Activated CD8-positive, alpha-beta T cell treated with anti-CD3 and anti-CD28 coated beads, Interleukin-2, amount 10 ng/mL, durations not matched to agents 7 days and 5 days (primary cell): ENCODE measurements at regions of chr16 and their contacts with region 1.

Region 1: GRCh38 chr16:30429678-30430427 is at the start of gene DCTPP1:
- DNase-seq: peak; percentile 99
- ATAC-seq: peak; percentile 99
- H3K4me3 Mint-ChIP-seq: no peak within 1 kb of the TSS
- H3K27ac Mint-ChIP-seq: no peak within 1 kb of the TSS
- H3K4me1 Mint-ChIP-seq: peaks cover 40% of the 10 kb centered on the region
- H3K27me3 Mint-ChIP-seq: no peaks in the 10 kb centered on the region
- total RNA-seq, gene DCTPP1: 87.3 to 92.8 TPM

Region 2: DNA sequence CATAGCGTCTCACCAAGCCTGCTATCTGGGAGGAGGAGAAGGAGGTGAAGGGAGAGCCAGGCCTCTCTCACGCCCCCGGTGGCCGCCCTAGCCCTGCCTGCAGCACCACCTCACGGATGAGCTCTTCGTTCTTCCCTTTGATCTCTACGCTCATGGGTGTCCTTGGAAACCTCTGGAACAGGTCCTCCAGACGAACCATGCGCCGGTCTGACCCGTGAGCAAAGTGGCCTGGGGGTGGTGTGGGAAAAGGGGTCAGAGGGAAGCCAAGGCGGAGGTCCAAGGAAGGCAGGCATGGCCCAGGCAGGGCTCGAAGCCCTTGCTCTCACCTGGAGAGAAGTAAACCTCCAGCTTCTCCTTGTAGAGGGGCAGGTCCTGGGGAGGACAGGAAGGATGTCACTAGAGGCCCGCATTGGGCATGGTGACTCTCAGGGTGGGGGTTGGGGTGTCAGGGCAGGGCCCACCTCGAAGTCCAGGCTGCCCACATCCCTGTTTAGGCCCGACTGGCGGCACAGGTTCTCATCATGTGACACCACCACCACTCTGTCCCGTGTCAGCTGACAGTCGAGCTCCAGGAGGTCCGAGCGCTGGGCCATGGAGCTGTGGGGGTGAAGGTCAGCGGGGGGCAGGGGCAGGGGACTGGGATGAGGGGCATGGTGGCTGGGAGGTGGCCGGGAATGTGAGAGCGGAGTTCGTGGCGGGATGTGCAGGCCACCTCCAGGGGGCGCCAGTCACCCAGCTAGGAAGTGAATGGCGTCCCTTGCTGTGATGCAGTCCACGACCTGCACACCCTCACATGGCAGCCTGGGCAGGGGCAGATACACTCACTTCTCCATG is 317.4 kb before region 1 on chr16:
- CTCF ChIA-PET with region 1: no interaction called
- POLR2A ChIA-PET with region 1: no interaction called
- DNase-seq: peak; percentile 67
- ATAC-seq: peak; percentile 78
- H3K4me3 Mint-ChIP-seq: no peak overlapping the region
- H3K27ac Mint-ChIP-seq: peak overlapping the region; percentile 60
- H3K4me1 Mint-ChIP-seq: peaks cover 21% of the 10 kb centered on the region
- H3K27me3 Mint-ChIP-seq: no peaks in the 10 kb centered on the region

Region 3: GRCh38 chr16:30361180-30361579 is 68.7 kb before region 1 on chr16:
- CTCF ChIA-PET with region 1: no interaction called
- POLR2A ChIA-PET with region 1: no interaction called
- DNase-seq: no peak
- ATAC-seq: no peak
- H3K4me3 Mint-ChIP-seq: no peak overlapping the region
- H3K27ac Mint-ChIP-seq: no peak overlapping the region
- H3K4me1 Mint-ChIP-seq: peaks cover 38% of the 10 kb centered on the region
- H3K27me3 Mint-ChIP-seq: no peaks in the 10 kb centered on the region

Region 4: DNA sequence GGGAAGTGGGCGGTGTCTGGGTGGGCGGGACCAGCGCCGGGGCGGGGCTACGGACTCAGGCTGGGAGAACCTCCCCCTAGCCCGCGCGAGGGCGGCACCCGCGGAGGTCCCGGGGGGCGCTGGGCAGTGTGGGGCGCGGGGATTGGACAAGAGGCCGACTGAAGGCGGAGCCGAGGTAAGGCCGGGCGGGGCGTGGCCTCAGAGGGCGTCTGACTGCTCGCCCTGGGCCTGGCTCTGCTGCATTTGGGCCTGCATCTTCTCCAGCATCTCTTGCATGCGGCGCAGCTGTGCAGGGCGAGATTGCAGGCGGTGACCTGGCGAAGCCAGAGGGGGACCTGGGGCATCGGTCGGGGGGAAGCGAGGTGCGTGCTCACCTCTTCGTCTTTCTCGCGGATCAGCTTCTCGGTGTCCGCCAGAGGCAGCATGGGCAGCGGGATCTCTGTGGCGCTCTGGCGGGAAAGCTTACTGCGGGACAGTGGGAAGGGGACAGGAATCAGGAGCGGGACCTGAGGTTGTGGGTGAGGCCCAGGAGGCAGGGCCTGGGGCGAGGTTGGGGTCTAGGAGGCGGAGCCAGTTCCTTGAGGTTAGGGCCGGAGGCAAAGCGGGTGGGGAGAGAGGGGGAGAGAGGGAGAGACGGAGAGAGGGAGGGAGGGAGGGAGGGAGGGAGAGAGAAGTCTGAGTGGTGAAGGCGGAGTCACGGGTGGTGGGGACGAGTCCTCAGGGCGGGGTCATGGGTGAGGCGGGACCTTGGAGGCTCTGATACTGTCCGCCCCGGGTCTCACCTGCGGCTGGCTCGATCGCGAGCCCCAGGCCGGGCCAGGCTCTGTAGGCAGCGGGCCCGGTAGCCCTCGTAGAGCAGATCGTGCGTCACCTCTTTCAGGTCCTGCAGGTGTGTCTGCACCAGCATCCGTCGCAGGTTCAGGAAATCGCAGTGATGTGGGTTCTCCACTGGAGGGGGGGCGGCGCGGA is 51.3 kb before region 1 on chr16:
- CTCF ChIA-PET with region 1: interaction called, 15 read pairs
- POLR2A ChIA-PET with region 1: interaction called, 3 read pairs
- DNase-seq: peak; percentile 99
- ATAC-seq: peak; percentile 88
- H3K4me3 Mint-ChIP-seq: peak overlapping the region; percentile 99
- H3K27ac Mint-ChIP-seq: peak overlapping the region; percentile 100
- H3K4me1 Mint-ChIP-seq: peaks cover 65% of the 10 kb centered on the region
- H3K27me3 Mint-ChIP-seq: no peaks in the 10 kb centered on the region

Region 5: DNA sequence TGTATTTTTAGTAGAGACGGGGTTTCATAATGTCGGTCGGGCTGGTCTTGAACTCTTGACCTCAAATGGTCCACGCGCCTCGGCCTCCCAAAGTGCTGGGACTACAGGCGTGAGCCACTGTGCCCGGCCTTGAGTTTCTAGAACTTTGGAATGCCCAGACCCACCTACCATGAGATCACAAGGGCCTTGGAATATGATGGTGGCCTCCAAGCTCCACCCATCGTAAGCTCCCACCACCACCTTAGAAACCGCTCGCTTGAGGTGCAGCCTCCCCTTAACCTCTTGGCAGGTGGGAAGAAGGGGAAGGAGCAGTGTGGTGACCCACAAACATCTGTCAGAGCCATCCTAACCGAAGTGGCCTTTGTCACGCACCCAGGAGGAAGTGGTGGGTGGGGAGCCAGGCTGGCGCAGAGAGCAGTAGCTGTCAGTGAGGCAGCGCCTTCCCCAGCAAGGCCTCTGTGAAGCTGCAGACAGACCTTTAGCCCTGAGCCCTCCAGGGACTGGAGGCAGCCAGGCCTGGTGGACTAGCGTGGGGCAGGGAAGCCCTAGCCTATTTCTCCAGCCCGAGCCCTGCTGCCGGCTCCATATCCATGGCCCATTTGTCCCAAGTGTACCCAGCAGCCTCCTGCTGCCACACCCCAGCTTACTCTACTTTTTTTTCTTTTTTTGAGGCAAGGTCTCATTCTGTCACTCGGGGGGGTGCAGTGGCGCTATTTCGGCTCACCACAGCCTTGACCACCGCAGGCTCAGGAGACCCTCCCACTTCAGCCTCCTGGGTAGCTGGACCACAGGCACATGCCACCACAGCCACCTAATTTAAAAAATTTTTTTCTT is 28.9 kb after region 1 on chr16:
- CTCF ChIA-PET with region 1: interaction called, 42 read pairs
- POLR2A ChIA-PET with region 1: interaction called, 8 read pairs
- DNase-seq: peak; percentile 95
- ATAC-seq: peak; percentile 97
- H3K4me3 Mint-ChIP-seq: peak overlapping the region; percentile 71
- H3K27ac Mint-ChIP-seq: peak overlapping the region; percentile 98
- H3K4me1 Mint-ChIP-seq: peaks cover 74% of the 10 kb centered on the region
- H3K27me3 Mint-ChIP-seq: no peaks in the 10 kb centered on the region

Region 6: DNA sequence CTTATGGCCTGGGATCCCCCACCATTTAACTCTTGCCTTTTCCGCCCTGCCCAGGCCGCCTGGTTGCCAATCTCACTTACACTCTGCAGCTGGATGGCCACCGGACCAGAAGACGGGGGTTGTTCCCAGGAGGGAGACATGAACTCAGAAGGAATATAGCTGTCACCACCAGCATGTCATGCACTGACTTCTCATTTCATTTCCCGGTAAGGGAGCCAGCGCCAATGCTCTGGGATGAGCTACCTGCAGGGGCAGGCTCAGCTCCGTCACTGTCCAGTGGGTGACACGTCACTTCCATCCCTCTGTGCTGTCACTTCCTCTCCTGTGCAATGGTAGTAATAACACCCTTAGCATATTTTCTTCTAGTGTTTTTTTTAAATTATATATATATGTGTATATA is 69.4 kb after region 1 on chr16:
- CTCF ChIA-PET with region 1: interaction called, 11 read pairs
- POLR2A ChIA-PET with region 1: interaction called, 12 read pairs
- DNase-seq: no peak
- ATAC-seq: no peak
- H3K4me3 Mint-ChIP-seq: no peak overlapping the region
- H3K27ac Mint-ChIP-seq: peak overlapping the region; percentile 14
- H3K4me1 Mint-ChIP-seq: peaks cover 11% of the 10 kb centered on the region
- H3K27me3 Mint-ChIP-seq: no peaks in the 10 kb centered on the region

Region 7: DNA sequence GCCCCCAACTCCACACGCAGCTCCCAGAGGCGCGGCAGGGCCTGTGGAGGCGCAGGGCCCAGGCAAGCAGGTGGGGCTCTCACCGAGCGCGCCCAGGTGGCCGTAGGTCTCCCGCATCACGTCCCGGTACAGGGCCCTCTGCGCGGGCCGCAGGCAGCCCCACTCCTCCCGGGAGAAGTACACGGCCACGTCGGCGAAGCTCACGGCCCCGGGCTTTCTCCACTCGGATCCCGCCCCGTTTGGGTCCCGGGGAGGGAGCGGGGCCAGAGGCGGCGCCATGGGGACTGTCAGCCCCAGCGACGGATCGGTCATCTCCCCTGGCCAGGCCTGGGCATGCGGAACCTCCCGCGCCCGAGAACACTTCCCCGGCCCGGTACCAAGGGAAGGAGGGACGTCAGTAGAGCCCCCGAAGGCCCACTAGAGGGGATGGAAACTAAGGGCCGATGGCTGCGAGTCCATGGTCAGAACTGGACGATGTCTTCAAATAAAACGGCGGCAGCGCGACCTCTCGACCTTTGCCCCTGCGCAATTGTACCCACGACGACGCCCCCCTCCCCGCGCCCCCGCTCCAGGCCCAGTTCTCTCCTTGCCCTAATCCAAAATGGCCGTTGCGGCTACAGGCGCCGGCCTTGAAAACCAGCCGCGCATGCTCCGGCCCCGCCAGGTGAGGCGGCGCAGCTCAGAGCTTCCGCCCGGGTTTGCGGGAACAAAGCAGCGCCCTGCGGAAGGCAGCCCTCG is 104.7 kb after region 1 on chr16 and contains the start of gene ZNF747:
- CTCF ChIA-PET with region 1: interaction called, 46 read pairs
- POLR2A ChIA-PET with region 1: interaction called, 7 read pairs
- DNase-seq: peak; percentile 94
- ATAC-seq: peak; percentile 83
- H3K4me3 Mint-ChIP-seq: peak within 1 kb of the TSS; percentile 85
- H3K27ac Mint-ChIP-seq: peak within 1 kb of the TSS; percentile 95
- H3K4me1 Mint-ChIP-seq: peaks cover 42% of the 10 kb centered on the region
- H3K27me3 Mint-ChIP-seq: no peaks in the 10 kb centered on the region
- total RNA-seq, gene ZNF747: 8.9 to 10.8 TPM

Region 8: DNA sequence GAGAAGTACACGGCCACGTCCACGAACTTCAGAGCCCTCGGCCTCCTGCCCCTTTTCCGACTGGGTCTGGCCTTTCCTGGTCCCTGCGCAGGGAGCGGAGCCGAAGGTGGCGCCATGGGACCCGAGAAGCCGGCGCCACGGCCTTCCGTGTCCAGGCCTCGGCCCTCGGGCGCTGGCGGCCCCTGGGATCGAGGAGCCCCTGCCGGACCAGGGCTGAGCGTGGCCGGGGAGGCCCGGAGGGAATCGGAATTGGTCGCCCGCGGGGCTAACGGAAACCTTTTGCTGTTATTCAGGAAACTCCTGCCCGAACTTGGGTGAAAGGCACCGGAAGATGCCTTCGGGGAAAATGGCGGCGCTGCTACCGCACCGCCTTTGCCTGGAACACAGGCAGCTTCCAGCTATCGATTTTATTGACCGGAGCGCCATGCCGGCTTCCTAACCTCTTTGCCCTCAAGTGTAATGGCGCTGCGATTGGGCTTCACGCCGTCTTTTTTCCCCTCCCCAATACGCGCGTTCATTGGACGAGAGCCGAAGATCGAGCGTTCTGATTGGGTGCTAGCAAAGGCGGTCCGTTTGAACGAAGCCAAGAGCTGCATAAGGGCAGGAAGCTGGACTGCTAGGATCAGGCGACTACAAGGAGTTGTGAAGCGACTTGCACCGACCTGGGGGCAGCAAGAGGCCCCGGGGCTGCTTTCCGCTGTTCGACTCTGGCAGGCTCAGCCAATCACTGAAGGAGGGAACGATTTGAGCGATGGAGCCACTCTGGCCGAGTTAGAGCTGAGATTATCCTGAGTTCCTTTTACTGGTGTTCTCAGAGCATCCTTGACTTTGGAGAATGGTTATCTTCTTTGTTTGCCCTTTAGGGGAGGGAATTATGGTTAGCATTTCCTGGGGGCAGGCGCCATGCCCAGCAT is 180.3 kb after region 1 on chr16 and contains the start of gene ZNF689:
- CTCF ChIA-PET with region 1: interaction called, 22 read pairs
- POLR2A ChIA-PET with region 1: interaction called, 4 read pairs
- DNase-seq: peak; percentile 97
- ATAC-seq: peak; percentile 92
- H3K4me3 Mint-ChIP-seq: peak within 1 kb of the TSS; percentile 84
- H3K27ac Mint-ChIP-seq: peak within 1 kb of the TSS; percentile 96
- H3K4me1 Mint-ChIP-seq: peaks cover 19% of the 10 kb centered on the region
- H3K27me3 Mint-ChIP-seq: no peaks in the 10 kb centered on the region
- total RNA-seq, gene ZNF689: 12.0 to 13.4 TPM

Region 9: GRCh38 chr16:30710971-30711370 is 281.1 kb after region 1 on chr16:
- CTCF ChIA-PET with region 1: no interaction called
- POLR2A ChIA-PET with region 1: no interaction called
- DNase-seq: no peak
- ATAC-seq: no peak
- H3K4me3 Mint-ChIP-seq: no peak overlapping the region
- H3K27ac Mint-ChIP-seq: no peak overlapping the region
- H3K4me1 Mint-ChIP-seq: peaks cover 24% of the 10 kb centered on the region
- H3K27me3 Mint-ChIP-seq: no peaks in the 10 kb centered on the region